Vagina (tissue), 2 donors: ENCODE measurements at regions of chr2 and their contacts with region 1.

Region 1: DNA sequence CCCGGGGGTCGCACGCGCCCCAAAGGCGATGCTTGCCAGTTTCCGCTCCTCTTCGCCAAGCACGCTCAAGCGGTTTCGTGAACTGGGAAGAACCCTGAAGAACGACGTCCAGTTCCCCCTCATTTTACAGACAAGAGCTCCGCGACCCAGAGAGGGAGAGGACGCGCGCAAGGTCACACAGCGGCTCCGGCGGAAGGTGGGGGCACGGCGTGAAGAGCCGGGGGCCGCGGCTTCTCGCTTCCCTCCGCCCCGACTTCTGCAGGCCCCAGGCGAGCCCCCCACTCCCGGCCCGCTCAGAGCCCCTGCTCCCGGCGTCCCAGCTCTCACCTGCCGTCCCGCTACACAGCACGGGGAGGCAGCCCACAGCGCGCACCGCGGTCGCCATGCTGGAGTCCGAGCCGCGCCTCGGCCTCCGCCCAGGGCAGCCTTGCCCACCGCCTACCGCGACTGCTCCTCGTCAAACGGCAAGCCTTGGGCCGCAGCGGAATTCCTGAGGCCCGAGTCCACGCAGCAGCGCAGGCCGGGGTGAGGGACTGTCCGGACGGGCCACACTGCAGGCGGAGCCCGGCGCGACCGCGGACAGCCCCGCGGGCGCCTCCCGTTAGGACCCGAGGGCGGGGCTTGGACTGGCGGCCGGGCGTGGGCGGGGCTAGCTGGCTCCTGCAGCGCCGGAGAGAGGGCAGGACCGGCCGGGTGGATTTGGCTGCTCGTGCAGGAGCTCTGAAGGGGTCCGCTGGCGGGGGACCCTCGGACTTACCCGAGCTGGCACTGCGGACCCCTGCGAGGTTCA is at the start of gene MRPS5:
- DNase-seq: no peak
- H3K4me3 ChIP-seq: peak within 1 kb of the TSS; percentile 88 to 94
- H3K27ac ChIP-seq: peak within 1 kb of the TSS; percentile 80
- H3K4me1 ChIP-seq: peaks cover 31% of the 10 kb centered on the region
- H3K27me3 ChIP-seq: no peaks in the 10 kb centered on the region
- CTCF ChIP-seq: no peak
- POLR2A ChIP-seq: peak in 1 of 2 donors; percentile 53
- total RNA-seq, gene MRPS5: 55.0 TPM

Region 2: DNA sequence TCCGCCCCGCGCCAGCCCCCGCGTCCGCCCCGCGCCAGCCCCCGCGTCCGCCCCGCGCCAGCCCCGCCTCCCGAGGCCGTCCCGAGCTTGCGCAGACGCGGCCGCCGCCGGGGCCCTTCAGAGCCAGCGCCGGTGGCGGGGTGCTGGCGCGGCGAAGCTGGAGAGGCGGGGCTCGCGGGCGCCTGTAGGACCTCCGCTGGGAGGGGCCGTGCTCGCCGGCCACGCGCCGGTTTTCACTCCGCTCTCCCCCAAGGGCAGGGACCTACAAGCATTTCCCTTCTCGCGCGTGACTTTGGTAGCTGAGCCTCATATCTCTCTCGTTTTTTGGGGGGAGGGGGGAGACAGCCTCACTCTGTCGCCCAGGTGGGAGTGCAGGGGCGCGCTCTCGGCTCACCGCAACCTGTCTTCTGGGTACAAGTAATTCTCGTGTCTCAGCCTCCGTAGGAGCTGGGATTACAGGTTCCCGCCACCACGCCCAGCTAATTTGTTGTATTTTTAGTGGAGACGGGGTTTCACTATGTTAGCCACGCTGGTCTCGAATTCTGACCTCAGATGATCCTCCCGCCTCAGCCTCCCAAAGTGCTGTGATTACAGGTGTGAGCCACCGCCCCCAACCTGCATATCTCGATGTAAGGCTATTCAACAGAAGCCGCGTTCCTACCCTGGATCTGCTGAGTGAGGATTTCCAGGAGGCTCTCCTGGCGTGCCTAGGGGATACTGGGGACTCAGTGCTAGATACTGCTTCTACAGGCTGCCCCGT is 38.3 kb after region 1 on chr2 and contains the start of gene ZNF514:
- intact Hi-C with region 1: loop called (anchors 5 kb)
- DNase-seq: no peak
- H3K4me3 ChIP-seq: peak within 1 kb of the TSS; percentile 67 to 74
- H3K27ac ChIP-seq: peak within 1 kb of the TSS; percentile 85
- H3K4me1 ChIP-seq: peaks cover 25% of the 10 kb centered on the region
- H3K27me3 ChIP-seq: no peaks in the 10 kb centered on the region
- CTCF ChIP-seq: no peak
- POLR2A ChIP-seq: no peak
- total RNA-seq, gene ZNF514: 14.0 TPM

Region 3: GRCh38 chr2:95185197-95185596 is 63.6 kb after region 1 on chr2:
- intact Hi-C with region 1: no loop called
- DNase-seq: no peak
- H3K4me3 ChIP-seq: no peak overlapping the region
- H3K27ac ChIP-seq: no peak overlapping the region
- H3K4me1 ChIP-seq: no peaks in the 10 kb centered on the region
- H3K27me3 ChIP-seq: no peaks in the 10 kb centered on the region
- CTCF ChIP-seq: no peak
- POLR2A ChIP-seq: no peak